ENCODE measurements at regions of chr10 and their contacts with region 1.

Region 1: DNA sequence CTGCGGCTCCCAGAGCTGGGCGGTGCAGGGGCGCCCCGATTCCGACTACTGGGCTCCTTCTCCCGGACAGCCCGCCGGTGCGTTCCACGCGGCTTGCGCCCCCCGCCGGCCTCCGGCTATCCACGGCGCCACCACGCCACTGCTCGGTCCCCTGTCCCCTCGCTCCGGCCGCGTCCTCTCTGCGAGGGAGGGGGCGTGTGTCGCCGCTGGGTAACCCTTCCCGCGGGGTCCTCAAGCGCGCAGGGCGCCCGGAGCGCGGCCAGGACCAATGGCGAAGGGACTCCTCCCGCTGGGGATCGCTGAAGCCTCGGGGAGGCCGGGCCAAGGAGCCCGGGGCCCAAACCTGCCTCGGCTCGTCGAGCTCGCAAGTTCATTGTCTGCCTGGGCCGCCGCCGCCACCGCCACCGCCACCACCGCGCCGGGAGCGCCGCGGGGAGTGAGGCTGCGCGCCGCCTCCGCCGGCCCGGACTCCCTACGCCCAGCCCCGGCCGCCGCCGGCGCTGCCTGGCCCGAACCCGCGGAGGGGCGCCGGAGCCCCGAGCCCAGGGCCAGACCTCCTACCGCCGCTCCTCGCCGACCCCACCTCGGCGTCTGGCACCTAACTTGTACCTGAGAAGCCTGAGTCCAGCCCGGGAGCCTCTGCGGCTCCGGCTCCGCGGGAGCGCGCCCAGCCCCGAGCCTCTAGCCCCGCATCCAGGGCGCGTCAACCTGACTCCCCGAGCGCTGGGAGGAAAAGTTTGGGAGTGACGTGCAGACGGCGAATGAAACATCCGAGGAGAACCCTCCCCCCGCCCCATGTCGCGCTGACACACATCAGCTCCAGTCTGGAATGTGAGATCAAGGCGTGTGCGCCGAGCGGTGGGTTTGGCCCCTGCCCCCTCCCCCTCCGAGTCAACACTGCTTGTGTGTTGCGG is at the start of gene CHST15:
- DNase-seq: no peak
- H3K4me3 ChIP-seq: peak within 1 kb of the TSS; percentile 61 to 91
- H3K27ac ChIP-seq: peak within 1 kb of the TSS; percentile 86
- H3K4me1 ChIP-seq: peaks cover 40% of the 10 kb centered on the region
- H3K27me3 ChIP-seq: no peaks in the 10 kb centered on the region
- CTCF ChIP-seq: no peak
- POLR2A ChIP-seq: peak in 1 of 2 donors; percentile 64
- total RNA-seq, gene CHST15: 27.0 TPM

Region 2: GRCh38 chr10:124152916-124153826 is 60.1 kb after region 1 on chr10:
- intact Hi-C with region 1: loop called (anchors 5 kb)
- DNase-seq: no peak
- H3K4me3 ChIP-seq: no peak overlapping the region
- H3K27ac ChIP-seq: peak overlapping the region; percentile 53
- H3K4me1 ChIP-seq: peaks cover 35% of the 10 kb centered on the region
- H3K27me3 ChIP-seq: no peaks in the 10 kb centered on the region
- CTCF ChIP-seq: no peak
- POLR2A ChIP-seq: no peak

Region 3: GRCh38 chr10:124612611-124613498 is 519.7 kb after region 1 on chr10:
- intact Hi-C with region 1: no loop called
- DNase-seq: no peak
- H3K4me3 ChIP-seq: no peak overlapping the region
- H3K27ac ChIP-seq: peak overlapping the region; percentile 44
- H3K4me1 ChIP-seq: peaks cover 21% of the 10 kb centered on the region
- H3K27me3 ChIP-seq: no peaks in the 10 kb centered on the region
- CTCF ChIP-seq: no peak
- POLR2A ChIP-seq: no peak

Measured in vagina (tissue), 2 donors.